Posterior cingulate gyrus (tissue), 11 donors: ENCODE measurements at regions of chr12 and their contacts with region 1.

Region 1: DNA sequence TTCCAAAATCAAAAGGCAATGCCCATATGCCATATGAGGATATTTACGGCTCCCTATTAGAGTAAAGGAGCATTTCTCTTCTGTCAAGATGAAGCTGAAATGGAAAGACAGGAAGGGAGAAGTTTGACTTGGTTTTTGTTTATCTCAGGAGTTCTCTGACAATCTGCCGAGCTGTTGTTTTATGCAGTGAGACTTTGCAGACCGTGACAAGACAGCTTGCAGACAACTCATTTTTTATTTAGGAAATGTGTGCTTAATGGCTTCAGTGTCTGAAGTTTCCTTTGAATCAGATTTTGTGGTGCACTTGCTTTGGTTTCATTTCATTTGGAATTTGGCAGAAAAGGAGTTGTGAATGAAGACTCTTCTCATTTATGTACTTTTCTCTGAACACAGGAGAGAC is 145.4 kb downstream of the C12orf50 start:
- DNase-seq: no peak

Region 2: GRCh38 chr12:86647800-86648199 is 1236.0 kb before region 1 on chr12:
- intact Hi-C with region 1: no loop called
- DNase-seq: no peak

Region 3: GRCh38 chr12:87853448-87854003 is 30.3 kb before region 1 on chr12:
- intact Hi-C with region 1: no loop called
- DNase-seq: peak in 1 of 10 donors; percentile 40

Region 4: GRCh38 chr12:87897662-87898061 is 13.9 kb after region 1 on chr12:
- intact Hi-C with region 1: loop called (anchors 1 kb)
- DNase-seq: no peak

Region 5: GRCh38 chr12:87943762-87944161 is 60.0 kb after region 1 on chr12:
- intact Hi-C with region 1: no loop called
- DNase-seq: peak in 1 of 10 donors; percentile 72